ENCODE measurements at regions of chr1 and their contacts with region 1.

Region 1: GRCh38 chr1:88502886-88503285 is 181.2 kb upstream of the PKN2 start:
- DNase-seq: no peak
- H3K4me3 ChIP-seq: no peak overlapping the region
- H3K27ac ChIP-seq: no peak overlapping the region
- H3K4me1 ChIP-seq: no peaks in the 10 kb centered on the region
- H3K27me3 ChIP-seq: no peaks in the 10 kb centered on the region
- CTCF ChIP-seq: no peak

Region 2: GRCh38 chr1:88210103-88210787 is 292.6 kb before region 1 on chr1:
- intact Hi-C with region 1: loop called (anchors 5 kb)
- DNase-seq: no peak
- H3K4me3 ChIP-seq: no peak overlapping the region
- H3K27ac ChIP-seq: no peak overlapping the region
- H3K4me1 ChIP-seq: no peaks in the 10 kb centered on the region
- H3K27me3 ChIP-seq: no peaks in the 10 kb centered on the region
- CTCF ChIP-seq: no peak

Region 3: DNA sequence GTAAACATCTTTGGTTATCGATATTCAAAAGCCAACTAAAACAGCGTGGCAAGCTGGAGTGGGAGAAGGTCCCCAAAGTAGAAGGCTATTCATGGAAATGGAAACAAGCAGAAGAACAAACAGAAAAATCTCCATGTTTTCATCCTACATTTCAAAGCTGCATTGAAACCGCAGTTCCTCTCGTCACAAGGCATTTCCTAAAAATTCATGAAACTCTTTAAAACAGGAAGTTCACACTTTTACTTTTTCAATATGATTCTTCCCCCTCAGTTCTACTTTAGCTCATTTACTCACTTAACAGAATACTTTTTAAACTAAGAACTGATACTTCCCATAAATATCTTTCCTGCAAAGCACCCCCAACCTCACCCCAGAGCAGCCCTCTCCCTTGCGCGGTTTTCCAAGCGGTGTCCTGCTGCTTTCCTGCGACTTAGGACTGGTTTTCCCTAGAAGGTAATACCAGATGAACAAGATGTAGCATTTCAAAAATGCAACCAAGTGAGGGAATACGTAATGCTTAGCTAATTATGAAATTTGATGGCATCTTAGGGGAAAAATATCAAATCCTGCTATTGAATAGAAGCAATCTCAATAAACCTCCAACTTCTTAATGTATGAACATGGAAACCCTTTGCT is 47.1 kb before region 1 on chr1:
- intact Hi-C with region 1: no loop called
- DNase-seq: no peak
- H3K4me3 ChIP-seq: no peak overlapping the region
- H3K27ac ChIP-seq: no peak overlapping the region
- H3K4me1 ChIP-seq: no peaks in the 10 kb centered on the region
- H3K27me3 ChIP-seq: no peaks in the 10 kb centered on the region
- CTCF ChIP-seq: no peak

Region 4: DNA sequence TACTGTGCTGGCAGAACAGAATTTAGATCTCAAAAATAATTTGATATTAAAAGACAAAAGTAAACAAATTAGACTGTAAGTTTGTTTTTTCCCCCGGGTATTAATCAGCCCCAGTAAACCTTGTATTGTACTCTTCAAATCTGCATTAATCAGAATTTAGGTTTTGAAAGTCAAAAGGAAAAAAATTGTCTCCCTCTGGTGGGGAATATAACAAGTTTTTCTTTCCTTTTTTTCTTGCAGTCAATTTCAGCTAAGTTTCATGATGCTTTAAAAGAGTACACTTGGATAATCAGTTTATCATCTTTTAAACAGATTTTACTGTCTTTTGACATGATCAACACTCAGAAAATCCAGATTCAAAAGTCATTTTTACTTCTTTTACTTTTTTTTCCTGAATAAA is 46.6 kb after region 1 on chr1:
- intact Hi-C with region 1: no loop called
- DNase-seq: no peak
- H3K4me3 ChIP-seq: no peak overlapping the region
- H3K27ac ChIP-seq: no peak overlapping the region
- H3K4me1 ChIP-seq: no peaks in the 10 kb centered on the region
- H3K27me3 ChIP-seq: no peaks in the 10 kb centered on the region
- CTCF ChIP-seq: no peak

Region 5: GRCh38 chr1:89274411-89274857 is 771.5 kb after region 1 on chr1:
- intact Hi-C with region 1: no loop called
- DNase-seq: no peak
- H3K4me3 ChIP-seq: no peak overlapping the region
- H3K27ac ChIP-seq: no peak overlapping the region
- H3K4me1 ChIP-seq: peaks cover 0 to 13% (median 2%) of the 10 kb centered on the region in 4 donors
- H3K27me3 ChIP-seq: no peaks in the 10 kb centered on the region
- CTCF ChIP-seq: no peak

Measured in tibial artery (tissue), 4 donors.